Activated T-helper 1 cell treated with anti-CD3 and anti-CD28 coated beads, Interleukin-12 subunit alpha, Interleukin-12 subunit beta, Interleukin-2, Interleukin-4 antibody, amounts not matched to agents 30 ng/mL and 10 ng/mL and 1 ng/mL, durations not matched to agents 14 hours and 24 hours and 36 hours (primary cell): ENCODE measurements at regions of chr12 and their contacts with region 1.

Region 1: GRCh38 chr12:120301962-120302815 is at the start of gene SIRT4:
- DNase-seq: peak; percentile 85
- H3K4me3 Mint-ChIP-seq: peak within 1 kb of the TSS; percentile 96
- H3K27ac Mint-ChIP-seq: peak within 1 kb of the TSS; percentile 86
- H3K4me1 Mint-ChIP-seq: peaks cover 6% of the 10 kb centered on the region
- H3K27me3 Mint-ChIP-seq: peaks cover 5% of the 10 kb centered on the region
- total RNA-seq, gene SIRT4: 1.0 and 1.7 TPM in 2 replicates

Region 2: GRCh38 chr12:120317224-120318105 is 15.3 kb after region 1 on chr12:
- intact Hi-C with region 1: loop called (anchors 1 kb)
- DNase-seq: peak; percentile 100
- H3K4me3 Mint-ChIP-seq: peak overlapping the region; percentile 89
- H3K27ac Mint-ChIP-seq: peak overlapping the region; percentile 92
- H3K4me1 Mint-ChIP-seq: peaks cover 16% of the 10 kb centered on the region
- H3K27me3 Mint-ChIP-seq: peaks cover 6% of the 10 kb centered on the region

Region 3: DNA sequence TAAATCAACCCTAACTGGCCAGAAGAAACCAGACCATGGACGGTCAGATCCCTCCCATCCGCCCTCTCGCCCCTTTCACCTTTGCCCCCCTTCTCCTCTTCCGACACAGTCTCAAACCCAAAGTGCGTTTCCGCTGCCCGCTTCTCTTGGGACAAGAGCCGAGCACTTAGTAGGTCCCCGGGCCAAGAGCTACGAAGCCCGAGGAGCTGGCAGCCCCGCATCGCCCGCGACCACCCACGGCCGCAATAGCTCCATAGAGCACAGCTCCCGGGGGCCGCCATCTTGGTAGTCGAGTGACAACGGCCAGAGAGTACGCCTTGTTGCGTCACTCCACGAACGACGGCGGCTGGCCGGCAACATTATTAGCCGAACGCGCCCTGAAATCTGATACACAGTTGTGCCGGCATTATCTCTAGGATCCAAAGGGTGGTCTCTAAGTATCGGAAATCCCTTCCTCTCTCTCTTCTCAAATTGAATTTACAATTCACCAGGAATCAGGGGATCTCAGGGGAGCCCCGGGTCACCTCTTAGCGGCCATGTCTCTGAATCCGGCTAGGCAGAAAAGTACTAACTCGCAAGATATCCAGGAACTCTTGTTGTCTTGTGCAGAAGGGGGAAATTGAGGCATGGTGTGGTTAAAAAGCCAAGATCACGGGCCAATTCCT is 226.8 kb after region 1 on chr12 and contains the start of gene COQ5:
- intact Hi-C with region 1: loop called (anchors 1 kb)
- DNase-seq: peak; percentile 75
- H3K4me3 Mint-ChIP-seq: peak within 1 kb of the TSS; percentile 100
- H3K27ac Mint-ChIP-seq: peak within 1 kb of the TSS; percentile 99
- H3K4me1 Mint-ChIP-seq: peaks cover 28% of the 10 kb centered on the region
- H3K27me3 Mint-ChIP-seq: no peaks in the 10 kb centered on the region
- total RNA-seq, gene COQ5: 27.8 and 29.8 TPM in 2 replicates